Activated B cell treated with CpG ODN at 0.5 μM for 24 hours (primary cell): ENCODE measurements at regions of chr20 and their contacts with region 1.

Region 1: DNA sequence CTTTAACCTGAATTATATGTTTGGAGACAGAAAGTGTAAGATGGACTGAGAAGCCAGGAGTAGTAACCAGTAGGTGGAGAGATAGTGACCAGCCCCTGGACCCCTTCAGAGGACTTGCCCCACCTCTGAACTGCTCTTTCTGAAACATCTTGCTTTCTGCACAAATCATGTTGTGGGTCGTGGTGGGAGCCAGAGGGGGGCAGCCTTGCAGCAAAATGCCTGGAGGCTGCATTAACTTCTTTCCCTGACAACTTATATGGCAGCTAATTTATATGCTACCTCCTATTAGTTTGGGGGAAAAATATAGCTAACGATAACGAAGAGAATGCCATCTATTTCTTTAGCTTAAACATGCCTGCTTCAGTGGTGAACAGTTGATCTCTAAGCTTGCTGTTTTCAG is 859.8 kb downstream of the MAFB start:
- DNase-seq: no peak
- ATAC-seq: peak; percentile 46
- H3K4me3 Mint-ChIP-seq: peak overlapping the region; percentile 59
- H3K27ac Mint-ChIP-seq: peak overlapping the region; percentile 84
- H3K4me1 Mint-ChIP-seq: peaks cover 57% of the 10 kb centered on the region
- H3K27me3 Mint-ChIP-seq: no peaks in the 10 kb centered on the region
- CTCF ChIP-seq: no peak

Region 2: DNA sequence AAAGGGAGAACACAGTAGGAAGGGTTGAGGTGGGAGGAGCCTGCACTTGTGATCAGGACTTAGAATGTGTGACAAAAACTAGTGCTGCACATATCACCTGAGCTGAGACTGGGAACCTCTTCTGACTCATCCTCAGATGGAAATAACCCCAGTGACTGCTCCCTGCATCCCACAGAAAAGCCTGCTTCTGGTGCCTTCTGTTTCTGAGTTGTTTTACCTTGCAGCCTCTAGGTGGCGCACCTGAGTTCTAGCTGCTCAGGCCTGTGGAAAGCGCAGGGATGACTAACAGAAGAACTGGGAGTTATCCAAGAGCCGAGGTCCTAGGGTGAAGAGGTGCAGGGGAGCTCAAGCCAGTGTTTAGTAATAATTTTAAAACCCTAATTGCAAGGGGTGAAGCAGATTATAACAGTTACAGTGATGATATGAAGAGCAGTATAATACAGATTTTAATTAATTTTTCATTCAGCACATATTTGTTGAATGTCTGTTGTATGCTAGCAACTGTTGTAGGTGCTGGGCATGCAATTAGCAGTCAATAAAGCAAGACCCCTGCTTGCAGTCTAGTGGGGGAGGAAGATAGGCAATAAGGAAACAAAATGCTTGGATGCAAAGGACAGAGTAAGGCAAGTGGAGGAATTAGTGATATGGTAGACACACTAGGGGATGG is 564.6 kb before region 1 on chr20:
- CTCF ChIA-PET with region 1: interaction called, 19 read pairs
- POLR2A ChIA-PET with region 1: no interaction called
- intact Hi-C with region 1: loop called (anchors 5 kb)
- DNase-seq: no peak
- ATAC-seq: no peak
- H3K4me3 Mint-ChIP-seq: no peak overlapping the region
- H3K27ac Mint-ChIP-seq: no peak overlapping the region
- H3K4me1 Mint-ChIP-seq: no peaks in the 10 kb centered on the region
- H3K27me3 Mint-ChIP-seq: peaks cover 6% of the 10 kb centered on the region
- CTCF ChIP-seq: peak; percentile 74

Region 3: GRCh38 chr20:39289316-39289715 is 539.9 kb before region 1 on chr20:
- CTCF ChIA-PET with region 1: no interaction called
- POLR2A ChIA-PET with region 1: no interaction called
- intact Hi-C with region 1: loop called (anchors 2 kb)
- DNase-seq: no peak
- ATAC-seq: peak; percentile 47
- H3K4me3 Mint-ChIP-seq: no peak overlapping the region
- H3K27ac Mint-ChIP-seq: no peak overlapping the region
- H3K4me1 Mint-ChIP-seq: peaks cover 2% of the 10 kb centered on the region
- H3K27me3 Mint-ChIP-seq: no peaks in the 10 kb centered on the region
- CTCF ChIP-seq: no peak

Region 4: GRCh38 chr20:39338469-39339376 is 490.5 kb before region 1 on chr20:
- CTCF ChIA-PET with region 1: no interaction called
- POLR2A ChIA-PET with region 1: no interaction called
- intact Hi-C with region 1: loop called (anchors 5 kb)
- DNase-seq: no peak
- ATAC-seq: peak; percentile 99
- H3K4me3 Mint-ChIP-seq: peak overlapping the region; percentile 12
- H3K27ac Mint-ChIP-seq: peak overlapping the region; percentile 84
- H3K4me1 Mint-ChIP-seq: peaks cover 29% of the 10 kb centered on the region
- H3K27me3 Mint-ChIP-seq: no peaks in the 10 kb centered on the region
- CTCF ChIP-seq: no peak

Region 5: DNA sequence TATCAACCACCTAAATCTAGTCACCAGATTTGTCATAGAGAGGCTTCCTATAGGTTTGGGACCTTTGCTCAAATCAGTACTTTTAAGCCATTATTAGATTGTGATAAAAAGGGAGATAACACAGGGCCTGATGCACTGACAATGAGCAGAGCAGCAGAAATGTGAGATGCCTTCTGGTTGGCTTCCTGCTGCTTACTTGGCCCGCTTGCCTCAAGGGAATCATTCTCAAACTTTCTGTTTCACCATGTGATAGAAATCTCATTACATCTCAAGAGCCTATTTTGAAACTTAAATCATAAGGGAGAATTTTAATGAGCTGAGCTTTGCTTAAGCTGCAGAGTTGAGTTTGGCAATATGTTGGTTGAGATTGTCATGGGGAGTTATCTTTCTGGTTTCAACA is 261.1 kb before region 1 on chr20:
- CTCF ChIA-PET with region 1: no interaction called
- POLR2A ChIA-PET with region 1: interaction called, 5 read pairs
- intact Hi-C with region 1: loop called (anchors 5 kb)
- DNase-seq: no peak
- ATAC-seq: peak; percentile 87
- H3K4me3 Mint-ChIP-seq: peak overlapping the region; percentile 2
- H3K27ac Mint-ChIP-seq: peak overlapping the region; percentile 74
- H3K4me1 Mint-ChIP-seq: peaks cover 14% of the 10 kb centered on the region
- H3K27me3 Mint-ChIP-seq: no peaks in the 10 kb centered on the region
- CTCF ChIP-seq: no peak

Region 6: GRCh38 chr20:39874049-39874888 is 45.0 kb after region 1 on chr20:
- CTCF ChIA-PET with region 1: interaction called, 29 read pairs
- POLR2A ChIA-PET with region 1: interaction called, 22 read pairs
- intact Hi-C with region 1: loop called (anchors 1 kb)
- DNase-seq: peak; percentile 23
- ATAC-seq: peak; percentile 95
- H3K4me3 Mint-ChIP-seq: no peak overlapping the region
- H3K27ac Mint-ChIP-seq: peak overlapping the region; percentile 24
- H3K4me1 Mint-ChIP-seq: peaks cover 9% of the 10 kb centered on the region
- H3K27me3 Mint-ChIP-seq: no peaks in the 10 kb centered on the region
- CTCF ChIP-seq: no peak

Region 7: DNA sequence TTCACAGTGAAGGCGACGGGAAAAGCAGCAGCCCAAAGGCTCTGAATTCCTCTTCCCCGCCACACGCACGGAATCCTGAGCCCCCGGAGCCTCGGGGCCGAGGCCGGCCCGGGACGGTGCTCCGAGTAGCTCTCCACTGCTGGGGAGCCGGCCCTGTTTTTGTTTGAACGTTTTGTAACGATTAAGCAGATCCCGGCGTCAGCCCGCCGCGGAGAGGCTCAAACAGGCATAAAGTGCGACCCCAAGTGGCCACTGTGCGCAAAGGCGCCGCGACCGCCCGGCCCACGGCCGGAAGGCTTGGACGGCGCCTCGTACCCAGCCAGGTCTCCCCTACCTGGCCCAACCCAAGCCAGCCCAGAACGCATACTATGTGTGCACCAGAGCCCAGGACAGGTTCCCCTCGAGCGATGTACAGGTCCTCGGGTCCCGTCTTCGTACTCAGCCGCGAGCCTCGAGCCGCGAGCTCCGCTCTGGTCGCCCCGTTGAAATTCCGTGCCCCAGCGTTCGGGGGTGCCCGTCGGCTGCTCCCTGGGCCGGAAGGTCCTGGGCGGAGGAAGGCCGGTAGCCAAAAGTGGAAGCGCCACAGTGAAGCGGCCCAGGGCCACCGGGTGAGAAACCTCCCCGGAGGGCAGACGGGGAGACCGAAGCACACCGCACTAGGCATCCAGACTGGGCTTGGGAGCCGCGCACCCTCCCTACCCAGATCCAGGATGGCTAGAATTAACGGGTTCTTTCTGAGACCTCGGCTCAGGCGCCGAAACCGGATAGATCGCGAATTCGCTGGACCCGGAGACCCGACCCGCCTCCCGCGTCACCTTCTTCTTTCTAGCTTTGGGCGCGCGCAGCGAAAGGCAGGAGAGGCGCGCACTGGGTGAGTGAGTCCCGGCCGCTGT is 860.9 kb after region 1 on chr20:
- CTCF ChIA-PET with region 1: interaction called, 7 read pairs
- POLR2A ChIA-PET with region 1: interaction called, 5 read pairs
- intact Hi-C with region 1: loop called (anchors 1 kb)
- DNase-seq: peak; percentile 59
- ATAC-seq: peak; percentile 56
- H3K4me3 Mint-ChIP-seq: peak overlapping the region; percentile 78
- H3K27ac Mint-ChIP-seq: no peak overlapping the region
- H3K4me1 Mint-ChIP-seq: peaks cover 19% of the 10 kb centered on the region
- H3K27me3 Mint-ChIP-seq: peaks cover 68% of the 10 kb centered on the region
- CTCF ChIP-seq: no peak